Ascending aorta (tissue), 2 donors: ENCODE measurements at regions of chr12 and their contacts with region 1.

Region 1: GRCh38 chr12:6851921-6852650 is at the start of gene USP5:
- DNase-seq: peak; percentile 99 to 100
- H3K4me3 ChIP-seq: peak within 1 kb of the TSS; percentile 65 to 79
- H3K27ac ChIP-seq: peak within 1 kb of the TSS; percentile 90 to 94
- H3K4me1 ChIP-seq: peaks cover 4 to 18% of the 10 kb centered on the region in 2 donors
- H3K27me3 ChIP-seq: no peaks in the 10 kb centered on the region
- CTCF ChIP-seq: no peak
- total RNA-seq, gene USP5: 46.2 TPM

Region 2: DNA sequence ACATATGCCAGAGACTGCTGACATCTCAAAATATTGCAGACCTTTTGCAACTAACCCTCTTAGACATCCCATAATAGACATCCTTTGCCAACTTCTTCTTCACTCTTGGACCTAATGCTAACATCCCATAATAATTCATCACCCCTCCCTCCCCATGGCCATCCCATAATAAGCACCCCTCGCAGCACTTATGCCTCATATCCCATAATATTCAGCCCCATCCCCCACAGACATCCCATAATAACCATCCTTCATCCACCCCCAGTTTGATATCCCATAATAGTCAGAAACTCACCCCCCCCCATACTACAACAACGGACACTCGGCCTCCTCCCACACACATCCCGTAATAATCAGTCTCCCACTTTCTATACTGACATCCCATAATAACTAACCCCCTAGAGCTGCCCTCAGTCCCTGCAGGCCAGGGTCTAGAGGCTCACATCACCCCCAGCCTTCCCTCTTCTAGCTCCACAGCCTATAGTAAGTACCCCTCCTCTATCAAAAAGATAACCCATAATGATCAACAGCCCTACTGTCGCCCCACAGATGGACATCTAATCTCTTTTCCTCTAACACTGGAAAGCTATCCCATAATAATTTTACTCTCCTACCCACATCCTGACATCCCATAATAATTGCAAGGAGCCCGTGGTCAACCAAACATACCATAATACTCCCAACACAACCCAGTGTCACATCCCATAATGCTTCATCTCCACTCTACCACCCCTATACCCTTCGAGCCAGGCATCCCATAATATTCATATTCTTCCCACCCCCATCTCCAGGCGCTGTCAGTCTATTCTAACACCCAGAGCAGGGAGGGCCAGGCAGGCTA is 244.1 kb before region 1 on chr12:
- intact Hi-C with region 1: loop called (anchors 5 kb)
- DNase-seq: peak in 1 of 2 donors; percentile 86
- H3K4me3 ChIP-seq: no peak overlapping the region
- H3K27ac ChIP-seq: peak overlapping the region; percentile 73 to 99
- H3K4me1 ChIP-seq: peaks cover 26 to 34% of the 10 kb centered on the region in 2 donors
- H3K27me3 ChIP-seq: no peaks in the 10 kb centered on the region
- CTCF ChIP-seq: no peak

Region 3: GRCh38 chr12:6688999-6689882 is 162.8 kb before region 1 on chr12 and contains the start of gene ZNF384:
- intact Hi-C with region 1: loop called (anchors 1 kb)
- DNase-seq: peak; percentile 91 to 99
- H3K4me3 ChIP-seq: peak within 1 kb of the TSS; percentile 68 to 91
- H3K27ac ChIP-seq: peak within 1 kb of the TSS; percentile 96 to 98
- H3K4me1 ChIP-seq: peaks cover 9 to 26% of the 10 kb centered on the region in 2 donors
- H3K27me3 ChIP-seq: no peaks in the 10 kb centered on the region
- CTCF ChIP-seq: peak in 1 of 3 experiments; percentile 27
- total RNA-seq, gene ZNF384: 15.1 TPM

Region 4: DNA sequence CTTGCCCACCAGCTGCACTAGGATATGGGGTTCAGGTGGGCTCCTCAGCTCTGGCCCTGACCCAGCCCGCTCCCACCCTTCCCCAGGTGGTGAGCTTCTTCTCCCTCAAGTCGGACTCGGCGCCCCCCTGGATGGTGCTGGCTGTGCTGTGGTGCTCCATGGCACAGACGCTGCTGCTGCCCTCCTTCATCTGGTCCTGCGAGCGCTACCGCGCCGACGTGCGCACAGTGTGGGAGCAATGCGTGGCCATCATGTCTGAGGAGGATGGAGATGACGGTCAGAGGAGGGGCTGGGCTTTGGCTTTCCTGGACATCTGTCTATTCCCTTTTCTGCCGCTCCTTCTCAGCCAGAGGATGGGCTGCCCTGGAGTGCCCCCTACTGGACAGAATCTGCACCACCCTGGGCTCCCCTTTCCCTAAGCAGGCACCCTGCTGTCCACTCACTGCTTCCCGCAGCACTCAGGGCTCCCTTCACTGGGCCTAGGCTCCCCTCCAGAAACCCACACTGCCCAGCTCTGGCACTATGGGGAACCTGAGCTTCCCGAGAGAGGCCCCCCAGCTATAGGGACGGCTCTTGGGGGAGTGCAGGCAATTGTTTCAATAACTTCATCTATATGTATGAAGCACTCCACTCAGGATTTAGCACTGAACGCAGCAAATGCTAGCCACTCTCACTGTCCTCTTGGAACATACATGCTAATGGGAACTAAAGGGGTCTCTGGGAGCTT is 26.5 kb before region 1 on chr12:
- intact Hi-C with region 1: loop called (anchors 2 kb)
- DNase-seq: peak; percentile 53 to 93
- H3K4me3 ChIP-seq: peak overlapping the region in 1 of 2 donors; percentile 46
- H3K27ac ChIP-seq: no peak overlapping the region
- H3K4me1 ChIP-seq: peaks cover 3 to 23% of the 10 kb centered on the region in 2 donors
- H3K27me3 ChIP-seq: peaks cover 7% of the 10 kb centered on the region
- CTCF ChIP-seq: peak; percentile 90 to 93 (median 91)

Region 5: DNA sequence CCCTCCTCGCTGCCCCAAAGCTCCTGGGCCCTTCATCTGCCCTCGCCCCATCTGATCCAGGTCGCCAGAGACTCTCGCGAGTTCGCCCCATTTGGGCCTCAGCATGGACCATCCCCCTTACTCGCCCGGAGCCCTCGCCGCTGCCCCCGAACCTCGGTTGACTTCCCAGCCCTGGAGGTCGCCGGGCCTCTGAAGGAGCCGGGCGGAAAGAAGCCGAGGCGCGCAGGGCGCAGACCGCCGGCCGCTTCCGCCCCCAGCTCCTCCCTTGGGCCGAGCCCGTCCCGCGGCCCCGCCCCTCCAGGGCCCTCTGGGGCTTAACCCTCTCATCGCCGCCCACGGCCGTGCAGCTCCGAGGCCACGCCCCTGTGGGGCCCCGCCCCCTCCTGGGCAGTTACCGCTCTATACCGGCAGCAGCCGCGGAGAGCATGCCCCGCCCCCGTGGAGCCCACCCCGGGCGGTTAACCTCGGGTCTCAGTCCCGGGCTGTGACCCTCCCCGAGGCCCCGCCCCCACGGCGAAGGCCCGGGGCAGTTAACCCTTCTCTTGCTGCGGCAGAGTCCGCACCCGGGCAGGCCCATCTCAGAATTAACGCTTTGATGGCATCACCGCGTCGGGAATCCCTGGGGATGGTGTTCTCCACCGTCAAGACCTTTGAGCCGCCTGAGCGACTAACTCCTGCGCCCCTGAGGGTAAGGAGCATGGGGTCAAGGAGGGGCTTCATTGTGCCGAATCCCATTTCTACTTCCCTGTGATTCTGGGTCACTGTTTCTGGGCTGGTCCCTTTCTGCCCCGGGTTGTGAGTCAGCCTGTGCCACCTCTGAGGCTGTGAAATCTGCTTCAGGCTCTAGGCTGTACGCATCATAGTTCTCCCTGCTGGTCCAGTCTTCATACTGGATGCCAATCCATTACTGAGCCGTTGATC is 21.3 kb after region 1 on chr12 and contains the start of gene SPSB2:
- intact Hi-C with region 1: loop called (anchors 1 kb)
- DNase-seq: peak; percentile 85 to 99
- H3K4me3 ChIP-seq: peak within 1 kb of the TSS; percentile 82 to 90
- H3K27ac ChIP-seq: peak within 1 kb of the TSS; percentile 85 to 92
- H3K4me1 ChIP-seq: peaks cover 13 to 28% of the 10 kb centered on the region in 2 donors
- H3K27me3 ChIP-seq: no peaks in the 10 kb centered on the region
- CTCF ChIP-seq: no peak
- total RNA-seq, gene SPSB2: 14.5 TPM

Region 6: GRCh38 chr12:6884539-6884938 is 32.5 kb after region 1 on chr12:
- intact Hi-C with region 1: no loop called
- DNase-seq: no peak
- H3K4me3 ChIP-seq: no peak overlapping the region
- H3K27ac ChIP-seq: no peak overlapping the region
- H3K4me1 ChIP-seq: no peaks in the 10 kb centered on the region
- H3K27me3 ChIP-seq: no peaks in the 10 kb centered on the region
- CTCF ChIP-seq: no peak

Region 7: GRCh38 chr12:7093892-7094291 is 241.8 kb after region 1 on chr12:
- intact Hi-C with region 1: no loop called
- DNase-seq: peak in 1 of 2 donors; percentile 61
- H3K4me3 ChIP-seq: no peak overlapping the region
- H3K27ac ChIP-seq: no peak overlapping the region
- H3K4me1 ChIP-seq: peaks cover 0 to 12% of the 10 kb centered on the region in 2 donors
- H3K27me3 ChIP-seq: no peaks in the 10 kb centered on the region
- CTCF ChIP-seq: no peak